Heart right ventricle (tissue), 16 donors: ENCODE measurements at regions of chr15 and their contacts with region 1.

Region 1: GRCh38 chr15:56732921-56733797 is at the start of gene ZNF280D:
- DNase-seq: peak; percentile 93
- ATAC-seq: peak; percentile 94 to 97 (median 96)
- H3K4me3 ChIP-seq: peak within 1 kb of the TSS; percentile 63 to 76 (median 69)
- H3K27ac ChIP-seq: peak within 1 kb of the TSS; percentile 96 to 99 (median 98)
- H3K4me1 ChIP-seq: peaks cover 0 to 62% (median 35%) of the 10 kb centered on the region in 9 donors
- H3K27me3 ChIP-seq: no peaks in the 10 kb centered on the region
- CTCF ChIP-seq: no peak
- total RNA-seq, gene ZNF280D: 20.0 to 30.9 (median 24.9) TPM

Region 2: DNA sequence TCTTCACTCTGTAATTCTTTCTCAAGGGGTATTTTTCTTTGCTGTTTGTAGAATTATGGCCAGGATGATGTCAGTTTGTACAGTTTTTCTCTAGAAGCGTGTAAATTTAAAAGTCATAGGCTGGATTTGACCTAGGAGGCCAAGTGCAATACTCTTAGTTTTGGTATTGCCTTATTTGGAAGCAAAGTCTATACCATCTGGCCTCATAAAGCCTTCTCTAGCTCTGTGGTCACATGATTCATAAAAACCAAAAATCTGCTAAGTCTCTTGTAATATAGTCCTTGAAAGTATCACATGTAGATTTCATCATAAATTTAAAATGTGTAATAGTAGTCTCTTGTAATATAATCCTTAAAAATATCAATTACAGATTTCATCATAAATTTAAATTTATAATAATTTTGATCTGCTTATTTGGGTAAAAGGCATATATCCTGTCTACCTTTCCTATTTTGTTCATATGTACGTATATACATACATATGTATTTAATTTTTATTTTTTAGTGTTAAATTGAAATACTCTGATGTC is 342.4 kb before region 1 on chr15:
- intact Hi-C with region 1: no loop called
- DNase-seq: no peak
- ATAC-seq: no peak
- H3K4me3 ChIP-seq: no peak overlapping the region
- H3K27ac ChIP-seq: no peak overlapping the region
- H3K4me1 ChIP-seq: no peaks in the 10 kb centered on the region
- H3K27me3 ChIP-seq: no peaks in the 10 kb centered on the region
- CTCF ChIP-seq: no peak

Region 3: GRCh38 chr15:56813995-56814394 is 80.8 kb after region 1 on chr15:
- intact Hi-C with region 1: loop called in 2 of 10 experiments (anchors 5 to 10 kb)
- DNase-seq: no peak
- ATAC-seq: peak in 5 of 8 donors; percentile 8 to 57 (median 49)
- H3K4me3 ChIP-seq: no peak overlapping the region
- H3K27ac ChIP-seq: peak overlapping the region in 3 of 10 donors; percentile 20 to 57 (median 33)
- H3K4me1 ChIP-seq: peaks cover 4 to 49% (median 31%) of the 10 kb centered on the region in 9 donors
- H3K27me3 ChIP-seq: no peaks in the 10 kb centered on the region
- CTCF ChIP-seq: peak in 1 of 9 donors; percentile 7

Region 4: DNA sequence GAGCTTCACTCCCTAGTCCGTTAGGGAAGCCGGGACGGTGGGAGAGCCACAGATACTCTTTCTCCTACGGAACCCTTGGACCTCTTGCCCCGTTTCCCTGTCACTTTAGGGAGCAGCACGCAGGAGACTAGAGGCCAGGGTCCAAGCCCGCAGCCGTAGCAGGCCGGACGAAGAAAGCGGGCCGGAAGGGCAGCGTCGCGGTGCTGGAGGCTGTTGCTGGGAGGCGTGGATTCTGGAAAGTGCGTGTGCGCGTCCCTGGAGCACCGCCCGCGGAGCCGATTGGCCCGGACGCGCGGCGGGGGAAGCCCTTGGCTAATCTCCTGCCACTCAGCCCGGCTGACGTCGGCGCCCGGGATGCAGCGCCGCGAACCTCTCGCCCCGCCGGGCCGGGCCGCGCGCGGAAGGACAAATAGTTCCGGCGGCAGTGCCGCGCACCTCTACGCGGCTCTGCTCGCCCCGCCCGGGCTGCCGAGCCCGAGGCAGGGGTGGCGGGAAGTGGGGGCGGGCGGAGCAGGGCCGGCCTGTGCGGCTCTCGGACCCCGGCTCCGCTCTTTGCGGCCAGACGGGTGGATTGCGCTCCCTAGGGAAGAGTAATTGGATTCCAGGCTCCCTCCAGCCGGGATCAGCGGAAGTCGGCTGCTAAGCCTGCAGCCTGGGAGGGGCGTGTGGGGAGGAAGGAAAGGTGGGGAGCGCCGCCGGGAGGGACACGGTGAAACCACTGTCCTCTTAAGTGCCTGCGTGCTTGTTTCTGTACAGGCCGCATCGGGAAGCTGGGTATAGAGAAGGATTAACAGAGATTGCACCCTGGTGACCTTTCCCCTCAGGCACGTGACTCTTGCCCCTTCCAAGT is 154.0 kb after region 1 on chr15:
- intact Hi-C with region 1: loop called in 1 of 10 experiments (anchors 5 kb)
- DNase-seq: peak; percentile 95 to 96
- ATAC-seq: peak; percentile 97 to 99 (median 98)
- H3K4me3 ChIP-seq: peak overlapping the region; percentile 51 to 78 (median 68)
- H3K27ac ChIP-seq: peak overlapping the region; percentile 96 to 99 (median 98)
- H3K4me1 ChIP-seq: peaks cover 0 to 33% (median 21%) of the 10 kb centered on the region in 9 donors
- H3K27me3 ChIP-seq: no peaks in the 10 kb centered on the region
- CTCF ChIP-seq: peak in 4 of 9 donors; percentile 10 to 32 (median 20)